SK-MEL-5 (cell line): ENCODE measurements at regions of chr22 and their contacts with region 1.

Region 1: DNA sequence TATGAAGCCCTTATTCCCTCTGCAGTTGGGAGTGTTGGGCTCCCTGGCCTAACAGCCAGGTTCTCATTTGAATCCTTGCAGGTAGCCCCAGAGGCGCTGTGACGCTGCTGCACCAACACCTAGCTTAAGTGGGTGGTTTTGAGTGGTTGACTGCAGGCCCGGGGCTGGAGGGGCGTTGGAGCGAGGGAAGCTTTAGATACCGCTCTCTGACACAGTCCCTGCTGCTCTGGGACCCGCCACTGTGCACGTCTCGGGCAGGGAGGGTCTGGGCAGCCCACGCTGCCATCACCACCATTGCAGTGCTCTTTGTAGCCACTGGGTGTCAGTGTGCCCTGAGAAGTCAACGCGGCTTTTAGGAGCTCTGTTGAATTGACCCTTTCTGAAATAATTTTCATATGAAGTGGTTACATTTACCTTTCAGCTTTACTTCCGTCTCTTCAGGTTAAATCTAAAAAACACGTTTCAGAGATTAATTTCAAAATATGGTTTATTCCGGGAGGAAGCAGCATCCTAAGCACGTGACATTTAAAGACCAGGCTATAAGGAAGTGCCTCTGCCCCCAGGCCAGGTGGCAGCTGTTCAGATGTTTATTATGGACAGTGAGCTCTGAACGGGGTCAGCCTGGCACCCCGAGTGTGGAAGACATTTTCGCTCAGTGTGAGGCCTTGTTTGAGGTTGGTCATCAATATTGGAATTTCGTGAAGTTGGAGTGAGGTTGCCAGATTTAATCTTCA is 30.9 kb upstream of the PARVB start:
- DNase-seq: peak; percentile 73

Region 2: DNA sequence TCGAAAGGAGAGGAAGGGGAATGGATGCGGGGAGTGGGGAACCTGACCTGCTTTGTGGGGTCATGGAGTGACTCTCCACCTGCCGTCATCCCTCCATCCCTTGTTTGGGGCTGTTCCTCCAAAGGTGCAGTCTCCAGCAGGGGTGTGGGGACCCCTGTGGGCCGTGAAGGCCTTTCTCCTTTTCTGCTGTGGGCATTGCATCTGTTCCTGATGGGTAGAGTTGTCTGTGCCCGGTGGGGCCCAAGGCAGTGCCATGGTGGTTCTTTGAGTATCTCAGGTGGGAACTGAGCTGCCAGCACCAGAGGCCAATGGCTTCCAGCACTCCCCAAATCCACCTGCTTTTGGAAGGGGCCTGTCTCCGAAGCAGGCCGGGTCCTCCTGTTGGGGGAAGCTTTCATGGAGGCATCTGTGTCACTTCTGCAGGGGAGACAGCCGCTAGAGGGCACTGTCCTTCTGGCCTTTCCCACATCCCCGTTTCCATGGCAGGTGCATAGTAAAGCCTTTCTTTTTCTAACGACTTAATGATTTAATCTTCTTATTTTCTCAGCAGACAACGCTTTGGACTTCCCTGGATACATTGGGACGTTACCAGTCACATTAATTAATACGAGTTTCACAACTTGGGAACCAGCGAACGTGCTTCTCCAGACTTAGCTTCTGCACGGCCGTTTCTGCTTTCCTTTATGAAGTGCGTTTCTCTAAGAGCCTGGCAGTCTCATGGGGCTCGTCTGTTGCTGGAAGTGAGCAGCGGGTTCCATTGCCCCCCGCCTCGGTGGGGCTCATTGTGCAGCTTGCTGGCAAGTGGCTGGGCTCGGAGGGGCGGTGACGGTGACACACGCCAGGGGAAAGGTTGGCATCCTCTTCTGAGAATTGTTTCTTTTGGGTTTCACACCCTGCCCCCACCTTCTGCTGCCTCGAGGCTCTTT is 88.0 kb after region 1 on chr22:
- in situ Hi-C with region 1: loop called (anchors 25 kb)
- DNase-seq: peak; percentile 73